Activated CD4-positive, alpha-beta T cell treated with anti-CD3 and anti-CD28 coated beads for 36 hours (primary cell): ENCODE measurements at regions of chr13 and their contacts with region 1.

Region 1: GRCh38 chr13:27130979-27131623 is 40.5 kb downstream of the USP12 start:
- DNase-seq: peak; percentile 87
- ATAC-seq: peak; percentile 90
- H3K4me3 Mint-ChIP-seq: peak overlapping the region; percentile 24
- H3K27ac Mint-ChIP-seq: peak overlapping the region; percentile 80
- H3K4me1 Mint-ChIP-seq: peaks cover 89% of the 10 kb centered on the region
- H3K27me3 Mint-ChIP-seq: no peaks in the 10 kb centered on the region

Region 2: DNA sequence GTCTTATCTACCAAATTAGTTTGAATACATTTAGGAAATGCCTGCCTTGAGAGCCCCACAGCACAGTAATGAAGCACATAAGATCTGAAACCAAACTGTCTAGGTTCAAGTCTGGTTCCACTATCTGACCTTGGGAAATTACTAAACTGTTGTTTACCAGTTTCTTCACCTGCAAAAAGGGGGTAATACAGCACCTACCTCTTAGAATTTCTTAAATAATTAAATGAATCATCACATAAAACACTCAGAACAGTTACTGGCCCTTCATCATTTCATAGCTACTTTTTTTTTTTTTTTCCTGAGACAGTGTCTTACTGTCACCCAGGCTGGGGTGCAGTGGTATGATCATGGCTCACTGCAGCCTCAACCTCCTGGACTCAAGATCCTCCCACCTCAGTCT is 19.1 kb before region 1 on chr13:
- CTCF ChIA-PET with region 1: interaction called, 5 read pairs
- POLR2A ChIA-PET with region 1: no interaction called
- intact Hi-C with region 1: loop called in 1 of 2 experiments (anchors 2 kb)
- DNase-seq: no peak
- ATAC-seq: peak; percentile 80
- H3K4me3 Mint-ChIP-seq: no peak overlapping the region
- H3K27ac Mint-ChIP-seq: no peak overlapping the region
- H3K4me1 Mint-ChIP-seq: peaks cover 18% of the 10 kb centered on the region
- H3K27me3 Mint-ChIP-seq: no peaks in the 10 kb centered on the region

Region 3: DNA sequence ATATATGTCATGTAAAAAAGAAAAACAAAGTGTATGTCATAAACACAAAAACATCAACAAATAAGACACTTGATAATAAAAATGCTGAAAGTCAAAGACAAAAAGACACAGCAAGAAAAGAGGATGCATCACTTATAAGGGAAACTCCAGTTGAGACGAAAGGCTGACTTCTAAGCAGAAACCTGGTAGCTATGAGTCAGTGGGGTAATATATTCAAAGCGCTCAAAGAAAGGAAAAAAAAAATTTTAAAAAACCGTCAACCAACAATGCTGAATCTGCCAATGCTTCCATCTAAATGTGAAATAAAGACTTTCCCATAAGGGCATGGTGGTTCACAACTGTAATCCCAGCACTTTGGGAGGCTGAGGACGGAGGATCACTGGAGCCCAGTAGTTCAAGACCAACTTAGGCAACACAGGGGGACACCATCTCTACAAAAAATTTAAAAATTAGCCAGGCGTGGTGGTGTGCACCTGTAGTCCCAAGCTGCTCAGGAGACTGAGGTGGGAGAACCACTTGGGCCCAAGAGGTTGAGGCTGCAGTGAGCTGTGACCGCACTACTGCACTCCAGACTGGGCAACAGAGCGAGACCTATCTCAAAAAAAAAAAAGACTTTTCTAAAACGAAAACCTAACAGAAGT is 16.5 kb after region 1 on chr13:
- CTCF ChIA-PET with region 1: interaction called, 9 read pairs
- POLR2A ChIA-PET with region 1: interaction called, 7 read pairs
- intact Hi-C with region 1: loop called (anchors 1 kb)
- DNase-seq: no peak
- ATAC-seq: peak; percentile 89
- H3K4me3 Mint-ChIP-seq: peak overlapping the region; percentile 49
- H3K27ac Mint-ChIP-seq: peak overlapping the region; percentile 96
- H3K4me1 Mint-ChIP-seq: peaks cover 73% of the 10 kb centered on the region
- H3K27me3 Mint-ChIP-seq: no peaks in the 10 kb centered on the region

Region 4: DNA sequence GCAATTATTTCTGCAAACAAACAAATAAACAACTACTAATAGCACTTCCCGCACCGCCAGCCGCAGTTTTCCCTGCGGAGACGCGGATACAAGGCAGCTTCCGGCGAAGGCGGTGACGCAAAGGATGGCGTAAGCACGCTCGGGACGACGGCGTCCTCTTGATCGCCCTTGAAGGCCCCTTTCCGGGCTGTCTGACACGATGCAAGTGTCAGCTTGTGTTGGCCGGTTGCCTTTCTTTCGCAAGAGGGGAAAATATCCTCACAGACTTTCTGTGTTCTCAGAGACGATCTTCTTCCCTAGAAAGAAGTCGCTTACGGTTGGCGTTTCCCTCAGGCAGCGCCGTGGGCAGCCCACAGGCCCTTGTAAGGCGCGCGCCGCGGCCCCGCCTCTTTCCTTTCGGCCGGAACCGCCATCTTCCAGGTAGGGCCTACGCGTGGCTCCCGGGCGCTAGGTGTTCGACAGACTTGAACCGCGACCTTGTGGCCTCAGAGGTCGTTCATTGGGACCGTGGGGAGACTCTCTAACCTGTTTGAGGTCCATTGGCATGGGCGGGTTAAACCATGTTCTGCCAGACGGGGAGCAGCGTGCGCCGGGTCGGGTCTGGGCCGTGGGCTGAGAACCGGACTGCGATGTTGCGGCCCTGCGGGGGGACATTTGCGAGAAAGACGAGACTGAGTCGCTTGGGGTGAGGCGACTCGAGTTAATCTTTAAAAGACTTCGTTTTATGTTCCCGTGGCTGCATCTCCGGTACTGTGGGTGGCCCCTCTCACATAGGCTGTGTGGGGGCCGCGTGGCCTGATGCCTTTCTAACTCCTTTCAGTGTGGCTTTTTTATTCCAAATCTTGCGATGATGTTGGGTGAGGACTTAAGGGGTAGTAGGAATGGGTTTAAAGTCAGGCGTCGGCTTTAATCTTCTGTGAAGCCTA is 120.3 kb after region 1 on chr13 and contains the start of gene RPL21:
- CTCF ChIA-PET with region 1: no interaction called
- POLR2A ChIA-PET with region 1: interaction called, 3 read pairs
- intact Hi-C with region 1: loop called (anchors 1 kb)
- DNase-seq: peak; percentile 94
- ATAC-seq: peak; percentile 94
- H3K4me3 Mint-ChIP-seq: peak within 1 kb of the TSS; percentile 97
- H3K27ac Mint-ChIP-seq: peak within 1 kb of the TSS; percentile 98
- H3K4me1 Mint-ChIP-seq: peaks cover 44% of the 10 kb centered on the region
- H3K27me3 Mint-ChIP-seq: no peaks in the 10 kb centered on the region
- total RNA-seq, gene RPL21: 756 to 1,682 TPM

Region 5: DNA sequence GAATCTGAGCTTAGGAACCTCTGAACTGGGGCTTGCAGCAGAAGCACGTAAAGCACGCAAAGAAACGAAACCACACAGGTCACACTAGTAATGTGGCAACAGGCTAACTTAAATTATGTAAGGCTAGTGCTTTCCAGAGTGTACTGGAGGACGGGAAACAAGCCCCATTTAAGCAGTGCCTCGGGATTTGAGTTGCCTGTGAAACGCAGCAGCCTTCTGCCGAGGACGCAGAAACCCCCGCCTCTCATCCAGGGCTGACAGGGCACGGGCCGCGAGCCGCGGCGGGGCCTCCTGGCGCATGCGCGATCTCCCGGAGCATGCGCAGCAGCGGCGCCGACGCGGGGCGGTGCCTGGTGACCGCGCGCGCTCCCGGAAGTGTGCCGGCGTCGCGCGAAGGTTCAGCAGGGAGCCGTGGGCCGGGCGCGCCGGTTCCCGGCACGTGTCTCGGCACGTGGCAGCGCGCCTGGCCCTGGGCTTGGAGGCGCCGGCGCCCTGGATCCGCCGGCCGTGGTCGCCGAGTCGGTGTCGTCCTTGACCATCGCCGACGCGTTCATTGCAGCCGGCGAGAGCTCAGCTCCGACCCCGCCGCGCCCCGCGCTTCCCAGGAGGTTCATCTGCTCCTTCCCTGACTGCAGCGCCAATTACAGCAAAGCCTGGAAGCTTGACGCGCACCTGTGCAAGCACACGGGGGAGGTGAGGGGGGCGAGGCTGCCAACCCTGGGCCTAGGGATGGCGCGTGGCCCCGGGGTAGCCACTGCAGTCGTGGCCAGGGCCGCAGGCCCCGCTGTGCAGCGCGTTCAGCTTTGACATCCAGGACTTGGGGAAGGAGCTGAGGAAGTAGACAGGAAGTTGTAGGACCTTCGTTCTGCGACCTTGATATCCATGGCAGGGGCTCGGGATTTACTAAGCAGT is 293.4 kb after region 1 on chr13 and contains the start of gene GTF3A:
- CTCF ChIA-PET with region 1: no interaction called
- POLR2A ChIA-PET with region 1: interaction called, 6 read pairs
- intact Hi-C with region 1: loop called in 1 of 2 experiments (anchors 1 kb)
- DNase-seq: peak; percentile 92
- ATAC-seq: peak; percentile 66
- H3K4me3 Mint-ChIP-seq: peak within 1 kb of the TSS; percentile 80
- H3K27ac Mint-ChIP-seq: peak within 1 kb of the TSS; percentile 97
- H3K4me1 Mint-ChIP-seq: peaks cover 45% of the 10 kb centered on the region
- H3K27me3 Mint-ChIP-seq: no peaks in the 10 kb centered on the region
- total RNA-seq, gene GTF3A: 177 to 208 TPM

Region 6: DNA sequence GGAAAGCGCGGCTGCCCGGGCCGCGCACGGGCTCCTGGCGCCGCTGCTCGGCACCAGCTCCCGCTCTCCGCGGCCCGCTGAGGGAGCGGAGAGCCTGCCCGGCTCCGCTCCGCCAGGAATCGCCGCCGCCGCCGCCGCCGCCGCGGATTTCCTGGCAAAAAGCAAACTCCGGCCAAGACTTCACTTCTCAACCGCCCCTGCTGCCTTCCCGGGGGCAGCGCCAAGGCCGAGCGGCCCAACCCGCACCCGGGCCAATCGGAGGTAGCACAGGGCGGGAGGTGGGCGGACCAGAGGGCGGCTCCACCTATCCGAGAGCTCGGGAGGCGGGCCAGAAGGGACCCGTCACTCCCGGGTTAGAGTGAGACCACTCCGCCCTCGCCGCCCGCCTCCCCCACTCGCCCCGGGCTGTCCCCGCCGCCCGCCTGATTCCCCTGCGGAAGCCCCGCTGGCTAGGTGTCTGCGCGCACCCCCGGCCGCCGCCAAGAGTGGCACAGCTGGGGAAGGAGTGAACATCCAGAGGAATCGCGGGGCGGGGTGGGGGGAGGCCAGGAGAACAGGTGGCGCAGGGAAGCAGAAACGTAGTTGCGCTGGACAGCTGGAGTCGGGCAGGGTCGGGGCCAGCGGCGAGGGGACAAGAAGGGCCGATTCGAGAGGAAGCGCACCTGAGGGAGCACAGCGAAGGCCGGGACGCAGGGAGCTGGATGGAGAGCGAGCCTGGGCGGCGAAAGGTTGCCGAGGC is 489.4 kb after region 1 on chr13 and contains the start of gene LNX2:
- CTCF ChIA-PET with region 1: no interaction called
- POLR2A ChIA-PET with region 1: no interaction called
- intact Hi-C with region 1: loop called in 1 of 2 experiments (anchors 1 kb)
- DNase-seq: peak; percentile 98
- ATAC-seq: peak; percentile 92
- H3K4me3 Mint-ChIP-seq: peak within 1 kb of the TSS; percentile 92
- H3K27ac Mint-ChIP-seq: peak within 1 kb of the TSS; percentile 91
- H3K4me1 Mint-ChIP-seq: peaks cover 51% of the 10 kb centered on the region
- H3K27me3 Mint-ChIP-seq: no peaks in the 10 kb centered on the region
- total RNA-seq, gene LNX2: 4.7 to 4.8 TPM

Region 7: GRCh38 chr13:28718543-28719226 is 1587.6 kb after region 1 on chr13 and contains the start of gene SLC46A3:
- CTCF ChIA-PET with region 1: no interaction called
- POLR2A ChIA-PET with region 1: no interaction called
- intact Hi-C with region 1: loop called in 1 of 2 experiments (anchors 10 kb)
- DNase-seq: peak; percentile 97
- ATAC-seq: peak; percentile 100
- H3K4me3 Mint-ChIP-seq: peak within 1 kb of the TSS; percentile 84
- H3K27ac Mint-ChIP-seq: peak within 1 kb of the TSS; percentile 94
- H3K4me1 Mint-ChIP-seq: peaks cover 23% of the 10 kb centered on the region
- H3K27me3 Mint-ChIP-seq: no peaks in the 10 kb centered on the region
- total RNA-seq, gene SLC46A3: 2.8 to 3.2 TPM